Pancreas (tissue), 10 donors: ENCODE measurements at regions of chr2 and their contacts with region 1.

Region 1: GRCh38 chr2:74715078-74715791 is 61.2 kb downstream of the SEMA4F start:
- DNase-seq: peak; percentile 53 to 91 (median 80)
- ATAC-seq: peak; percentile 94 to 98 (median 96)
- H3K4me3 ChIP-seq: peak overlapping the region; percentile 30 to 65 (median 42)
- H3K27ac ChIP-seq: no peak overlapping the region
- H3K4me1 ChIP-seq: no peaks in the 10 kb centered on the region
- H3K27me3 ChIP-seq: no peaks in the 10 kb centered on the region
- CTCF ChIP-seq: peak; percentile 65 to 87 (median 82)

Region 2: GRCh38 chr2:74458132-74458925 is 256.9 kb before region 1 on chr2 and contains the start of gene WBP1:
- intact Hi-C with region 1: no loop called
- DNase-seq: peak; percentile 92 to 100 (median 100)
- ATAC-seq: peak; percentile 84 to 92 (median 86)
- H3K4me3 ChIP-seq: peak within 1 kb of the TSS; percentile 59 to 70 (median 65)
- H3K27ac ChIP-seq: peak within 1 kb of the TSS; percentile 86 to 99 (median 95)
- H3K4me1 ChIP-seq: peaks cover 14 to 24% (median 16%) of the 10 kb centered on the region in 3 donors
- H3K27me3 ChIP-seq: no peaks in the 10 kb centered on the region
- CTCF ChIP-seq: no peak
- total RNA-seq, gene WBP1: 29.1 to 50.4 (median 37.4) TPM

Region 3: GRCh38 chr2:74876081-74876886 is 161.0 kb after region 1 on chr2:
- intact Hi-C with region 1: loop called (anchors 5 to 10 kb)
- DNase-seq: peak in 1 of 6 donors; percentile 41
- ATAC-seq: peak; percentile 79 to 91 (median 84)
- H3K4me3 ChIP-seq: no peak overlapping the region
- H3K27ac ChIP-seq: no peak overlapping the region
- H3K4me1 ChIP-seq: no peaks in the 10 kb centered on the region
- H3K27me3 ChIP-seq: no peaks in the 10 kb centered on the region
- CTCF ChIP-seq: peak; percentile 36 to 77 (median 66)

Region 4: DNA sequence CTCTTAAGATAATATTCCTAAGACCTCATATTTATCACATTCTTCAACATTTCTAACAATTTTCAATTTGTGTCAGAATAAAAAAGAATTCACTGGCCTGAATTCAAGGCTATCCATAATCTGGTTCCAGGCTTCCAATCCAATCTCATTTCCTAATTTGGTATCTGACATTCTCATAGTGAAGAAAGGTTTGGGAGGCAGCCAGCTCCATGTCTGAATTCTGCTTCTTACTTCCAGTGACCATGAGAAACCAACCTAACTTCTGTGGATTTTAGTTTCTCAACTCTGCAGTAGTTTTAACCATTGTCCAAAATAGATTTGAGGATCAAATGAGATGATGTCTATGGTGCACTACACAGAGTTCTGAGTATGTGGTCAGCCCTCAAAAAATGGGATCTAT is 1434.6 kb after region 1 on chr2:
- intact Hi-C with region 1: no loop called
- DNase-seq: no peak
- ATAC-seq: no peak
- H3K4me3 ChIP-seq: no peak overlapping the region
- H3K27ac ChIP-seq: no peak overlapping the region
- H3K4me1 ChIP-seq: no peaks in the 10 kb centered on the region
- H3K27me3 ChIP-seq: no peaks in the 10 kb centered on the region
- CTCF ChIP-seq: no peak